ENCODE measurements at regions of chr17 and their contacts with region 1.

Region 1: GRCh38 chr17:17940451-17940911 is 31.7 kb downstream of the TOM1L2 start:
- DNase-seq: no peak
- ATAC-seq: no peak; the same call in 1 of the 2 replicates
- H3K4me3 ChIP-seq: no peak overlapping the region
- H3K27ac ChIP-seq: peak overlapping the region; percentile 17; the same call in 1 of the 2 replicates
- H3K4me1 ChIP-seq: peaks cover 79 to 82% of the 10 kb centered on the region in 2 experiments
- H3K27me3 ChIP-seq: no peaks in the 10 kb centered on the region
- CTCF ChIP-seq: no peak
- POLR2A ChIP-seq: no peak
- RAD21 ChIP-seq: no peak

Region 2: DNA sequence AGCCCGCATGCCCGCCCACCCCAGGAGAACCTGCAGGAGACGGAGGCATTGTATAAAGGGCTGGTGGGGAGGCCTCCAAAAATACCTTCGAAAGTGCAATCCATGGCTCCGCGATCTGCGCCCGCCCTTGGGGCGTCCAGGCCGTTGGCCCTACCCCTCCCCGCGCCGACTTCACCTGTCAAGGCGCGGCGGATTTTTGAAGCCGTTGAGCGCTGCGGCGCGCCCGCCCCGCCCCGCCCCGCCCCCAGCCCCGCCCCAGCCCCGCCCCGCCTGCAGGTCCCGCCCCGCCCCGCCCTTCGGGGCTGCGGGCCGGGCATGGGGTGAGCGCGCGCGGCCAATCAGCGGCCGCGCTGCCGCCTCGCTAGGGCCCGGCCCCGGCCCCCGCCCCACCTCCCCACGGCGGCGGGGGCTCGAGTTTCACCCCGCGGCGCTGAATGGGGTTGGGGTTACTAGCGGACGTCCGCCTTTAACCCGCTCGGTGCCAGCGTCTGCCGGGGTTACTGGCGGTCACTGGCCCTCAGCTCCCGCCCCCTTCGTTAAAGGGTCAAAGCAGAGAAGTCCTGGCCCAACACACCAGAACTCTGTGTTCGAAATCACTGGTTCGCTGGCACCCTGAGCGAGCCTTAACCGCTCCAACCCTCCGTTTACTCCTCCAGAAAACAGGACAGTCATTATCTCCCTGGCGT is 116.9 kb before region 1 on chr17:
- CTCF ChIA-PET with region 1: no interaction called
- POLR2A ChIA-PET with region 1: no interaction called
- RAD21 ChIA-PET with region 1: interaction called in 1 of 2 experiments, 10 read pairs
- intact Hi-C with region 1: no loop called
- DNase-seq: peak; percentile 56
- ATAC-seq: peak; percentile 84
- H3K4me3 ChIP-seq: peak overlapping the region; percentile 55 to 57
- H3K27ac ChIP-seq: peak overlapping the region; percentile 98
- H3K4me1 ChIP-seq: peaks cover 94 to 98% of the 10 kb centered on the region in 2 experiments
- H3K27me3 ChIP-seq: no peaks in the 10 kb centered on the region
- CTCF ChIP-seq: no peak
- POLR2A ChIP-seq: no peak
- RAD21 ChIP-seq: no peak

Region 3: DNA sequence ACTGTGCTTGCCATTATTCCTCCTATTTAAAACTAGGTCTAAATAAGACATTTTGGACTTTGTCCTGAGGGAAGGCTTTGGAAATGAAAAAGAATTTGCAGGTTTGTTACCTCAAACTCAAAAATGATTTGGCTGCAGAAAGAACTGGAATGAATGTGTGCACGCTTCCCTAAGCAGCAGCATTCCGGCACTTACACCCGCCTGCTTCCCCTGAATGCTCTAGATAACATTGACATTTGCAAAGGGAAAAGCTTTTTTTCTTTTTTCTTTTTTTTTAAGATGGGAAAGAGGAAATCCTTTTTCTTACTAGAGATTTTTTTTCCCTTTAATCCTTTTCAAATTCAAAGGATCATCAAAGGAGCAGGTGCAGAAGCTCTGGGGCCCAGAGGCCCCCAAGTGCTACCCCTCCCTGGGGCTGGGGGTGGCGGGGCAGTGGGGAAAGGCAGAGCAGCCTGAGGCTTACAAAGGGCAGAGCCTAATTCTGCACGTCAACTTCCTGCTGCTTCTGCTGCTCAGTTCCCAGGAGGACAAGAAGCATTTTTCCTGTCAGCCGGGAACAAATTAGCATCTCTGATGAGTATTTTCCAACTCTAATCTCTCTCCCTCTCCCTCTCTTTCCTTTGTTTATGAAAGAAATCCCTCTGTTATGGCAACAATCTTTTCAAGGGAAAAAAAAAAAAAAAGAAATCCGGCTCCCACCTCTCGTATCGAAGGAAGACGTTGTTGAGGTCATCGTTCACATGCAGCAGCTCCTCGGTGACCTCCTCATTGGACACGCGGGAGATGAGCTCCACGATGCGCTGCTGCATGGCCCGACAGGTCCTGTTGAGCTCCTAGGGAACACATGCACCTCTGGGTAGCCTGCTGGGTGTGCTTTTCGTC is 71.6 kb before region 1 on chr17:
- CTCF ChIA-PET with region 1: no interaction called
- POLR2A ChIA-PET with region 1: no interaction called
- RAD21 ChIA-PET with region 1: no interaction called
- intact Hi-C with region 1: no loop called
- DNase-seq: no peak
- ATAC-seq: no peak
- H3K4me3 ChIP-seq: no peak overlapping the region
- H3K27ac ChIP-seq: no peak overlapping the region
- H3K4me1 ChIP-seq: peaks cover 0 to 8% of the 10 kb centered on the region in 2 experiments; a peak in 1 of 4 replicates
- H3K27me3 ChIP-seq: no peaks in the 10 kb centered on the region
- CTCF ChIP-seq: no peak
- POLR2A ChIP-seq: no peak
- RAD21 ChIP-seq: no peak

Region 4: GRCh38 chr17:18038861-18039534 is 98.5 kb after region 1 on chr17 and contains the starts of genes ATPAF2 and GID4:
- CTCF ChIA-PET with region 1: no interaction called
- POLR2A ChIA-PET with region 1: no interaction called
- RAD21 ChIA-PET with region 1: no interaction called
- intact Hi-C with region 1: no loop called
- DNase-seq: peak; percentile 97
- ATAC-seq: peak; percentile 92
- H3K4me3 ChIP-seq: peak within 1 kb of the TSS; percentile 84 to 85
- H3K27ac ChIP-seq: peak within 1 kb of the TSS; percentile 80
- H3K4me1 ChIP-seq: peaks cover 6 to 21% of the 10 kb centered on the region in 2 experiments; a peak in 3 of 4 replicates
- H3K27me3 ChIP-seq: no peaks in the 10 kb centered on the region
- CTCF ChIP-seq: peak in 1 of 3 experiments; percentile 12; a peak in 1 of 6 replicates
- POLR2A ChIP-seq: peak; percentile 59
- RAD21 ChIP-seq: no peak
- total RNA-seq, gene ATPAF2: 46.1 TPM
- total RNA-seq, gene GID4: 10.8 TPM

Measured in HCT116 (cell line).